ENCODE measurements at regions of chr4 and their contacts with region 1.

Region 1: GRCh38 chr4:81421346-81422218 is 50.1 kb downstream of the RASGEF1B start:
- DNase-seq: peak; percentile 76
- H3K4me3 ChIP-seq: no peak overlapping the region
- H3K27ac ChIP-seq: peak overlapping the region; percentile 69
- H3K4me1 ChIP-seq: peaks cover 4% of the 10 kb centered on the region
- H3K27me3 ChIP-seq: no peaks in the 10 kb centered on the region
- CTCF ChIP-seq: no peak

Region 2: DNA sequence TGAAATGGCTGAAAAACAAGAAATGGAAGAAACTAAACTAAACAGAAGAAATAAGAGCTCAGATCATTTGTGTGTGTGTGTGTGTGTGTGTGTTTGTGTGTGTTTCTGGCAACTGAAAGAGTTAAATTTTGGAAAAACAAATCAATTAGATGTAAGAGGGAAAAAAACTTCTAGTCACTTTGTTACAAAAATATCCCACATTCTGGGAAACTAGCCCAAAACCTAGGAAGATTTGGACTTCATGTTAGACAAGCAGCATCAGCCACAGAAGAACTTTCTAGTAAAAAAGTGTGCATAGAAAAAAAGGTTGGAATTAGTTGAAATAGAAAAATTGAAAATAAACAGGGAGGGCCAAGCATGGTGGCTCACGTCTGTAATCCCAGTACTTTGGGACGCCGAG is 95.0 kb before region 1 on chr4:
- intact Hi-C with region 1: no loop called
- DNase-seq: no peak
- H3K4me3 ChIP-seq: no peak overlapping the region
- H3K27ac ChIP-seq: no peak overlapping the region
- H3K4me1 ChIP-seq: no peaks in the 10 kb centered on the region
- H3K27me3 ChIP-seq: no peaks in the 10 kb centered on the region
- CTCF ChIP-seq: no peak

Region 3: GRCh38 chr4:81378386-81378785 is 43.2 kb before region 1 on chr4:
- intact Hi-C with region 1: no loop called
- DNase-seq: no peak
- H3K4me3 ChIP-seq: no peak overlapping the region
- H3K27ac ChIP-seq: no peak overlapping the region
- H3K4me1 ChIP-seq: no peaks in the 10 kb centered on the region
- H3K27me3 ChIP-seq: no peaks in the 10 kb centered on the region
- CTCF ChIP-seq: no peak

Region 4: GRCh38 chr4:81460191-81460701 is 38.7 kb after region 1 on chr4:
- intact Hi-C with region 1: loop called (anchors 5 kb)
- DNase-seq: no peak
- H3K4me3 ChIP-seq: no peak overlapping the region
- H3K27ac ChIP-seq: no peak overlapping the region
- H3K4me1 ChIP-seq: peaks cover 18% of the 10 kb centered on the region
- H3K27me3 ChIP-seq: no peaks in the 10 kb centered on the region
- CTCF ChIP-seq: no peak

Region 5: DNA sequence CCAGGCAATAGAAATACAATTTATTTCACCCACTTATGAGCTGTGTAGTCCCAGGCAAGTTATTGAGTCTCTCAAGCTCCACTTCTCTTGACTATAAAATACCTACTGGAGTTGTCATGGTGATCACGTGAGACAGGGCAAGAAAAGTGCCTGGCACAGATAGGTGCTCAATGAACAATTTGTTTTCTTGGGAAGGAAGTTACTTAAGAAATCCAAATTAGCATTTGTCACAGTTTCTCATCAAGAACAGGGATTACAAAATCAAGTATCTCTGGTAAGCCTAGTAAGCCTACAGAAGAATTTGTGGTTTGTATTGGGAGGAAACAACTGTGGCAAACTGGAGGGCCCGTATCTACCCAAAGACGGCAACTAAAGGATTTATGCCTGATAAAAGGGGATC is 87.6 kb after region 1 on chr4:
- intact Hi-C with region 1: no loop called
- DNase-seq: no peak
- H3K4me3 ChIP-seq: no peak overlapping the region
- H3K27ac ChIP-seq: no peak overlapping the region
- H3K4me1 ChIP-seq: no peaks in the 10 kb centered on the region
- H3K27me3 ChIP-seq: no peaks in the 10 kb centered on the region
- CTCF ChIP-seq: no peak

Region 6: GRCh38 chr4:81781799-81782198 is 360.2 kb after region 1 on chr4:
- intact Hi-C with region 1: no loop called
- DNase-seq: no peak
- H3K4me3 ChIP-seq: no peak overlapping the region
- H3K27ac ChIP-seq: no peak overlapping the region
- H3K4me1 ChIP-seq: no peaks in the 10 kb centered on the region
- H3K27me3 ChIP-seq: no peaks in the 10 kb centered on the region
- CTCF ChIP-seq: no peak

Measured in colonic mucosa (tissue), 4 donors.